CD8-positive, alpha-beta T cell (primary cell): ENCODE measurements at regions of chr19 and their contacts with region 1.

Region 1: DNA sequence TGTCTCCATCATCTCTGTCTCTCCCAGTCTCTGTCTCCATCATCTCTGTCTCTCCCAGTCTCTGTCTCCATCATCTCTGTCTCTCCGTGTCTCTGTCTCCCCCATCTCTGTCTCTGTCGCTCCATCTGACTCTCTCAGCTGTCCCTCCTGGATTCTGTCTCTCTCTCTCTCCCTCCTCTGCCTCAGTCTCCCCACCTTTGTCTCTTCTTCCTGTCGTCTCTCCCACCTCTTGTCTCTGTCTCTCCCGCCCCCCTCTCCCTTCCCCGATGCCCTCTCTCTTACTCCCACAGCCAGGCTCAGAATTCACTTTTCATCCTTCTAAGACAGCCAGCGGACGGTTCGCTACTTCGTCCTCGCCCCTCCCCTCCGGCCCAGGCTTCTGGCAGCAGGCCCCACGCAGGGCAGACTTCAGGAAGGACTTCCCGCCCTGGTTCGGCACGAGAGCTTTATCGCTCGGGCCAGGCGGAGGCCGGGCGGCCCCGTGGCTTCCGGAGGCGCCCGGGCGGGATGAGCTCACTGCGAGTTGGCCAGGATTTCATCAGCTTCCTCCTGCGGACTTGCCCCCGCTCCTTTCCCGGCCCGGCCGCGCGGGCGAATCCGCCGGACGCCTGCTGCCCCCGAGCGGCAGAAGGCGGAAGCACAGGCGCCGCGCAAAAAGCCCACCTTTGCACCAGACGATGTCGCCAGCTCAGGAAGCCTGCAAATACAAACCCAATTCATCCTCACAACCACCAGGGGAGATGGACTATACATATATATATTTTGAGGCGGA is 12.4 kb upstream of the CCDC9 start:
- DNase-seq: peak; percentile 81 to 96 (median 88)
- ATAC-seq: peak; percentile 52
- H3K4me3 ChIP-seq: peak overlapping the region; percentile 27 to 40
- H3K4me3 Mint-ChIP-seq: peak overlapping the region; percentile 65
- H3K27ac ChIP-seq: peak overlapping the region; percentile 18 to 62
- H3K27ac Mint-ChIP-seq: peak overlapping the region; percentile 75
- H3K4me1 ChIP-seq: peaks cover 47% of the 10 kb centered on the region
- H3K4me1 Mint-ChIP-seq: peaks cover 36% of the 10 kb centered on the region
- H3K27me3 ChIP-seq: no peaks in the 10 kb centered on the region
- H3K27me3 Mint-ChIP-seq: no peaks in the 10 kb centered on the region
- CTCF ChIP-seq: peak; percentile 98

Region 2: DNA sequence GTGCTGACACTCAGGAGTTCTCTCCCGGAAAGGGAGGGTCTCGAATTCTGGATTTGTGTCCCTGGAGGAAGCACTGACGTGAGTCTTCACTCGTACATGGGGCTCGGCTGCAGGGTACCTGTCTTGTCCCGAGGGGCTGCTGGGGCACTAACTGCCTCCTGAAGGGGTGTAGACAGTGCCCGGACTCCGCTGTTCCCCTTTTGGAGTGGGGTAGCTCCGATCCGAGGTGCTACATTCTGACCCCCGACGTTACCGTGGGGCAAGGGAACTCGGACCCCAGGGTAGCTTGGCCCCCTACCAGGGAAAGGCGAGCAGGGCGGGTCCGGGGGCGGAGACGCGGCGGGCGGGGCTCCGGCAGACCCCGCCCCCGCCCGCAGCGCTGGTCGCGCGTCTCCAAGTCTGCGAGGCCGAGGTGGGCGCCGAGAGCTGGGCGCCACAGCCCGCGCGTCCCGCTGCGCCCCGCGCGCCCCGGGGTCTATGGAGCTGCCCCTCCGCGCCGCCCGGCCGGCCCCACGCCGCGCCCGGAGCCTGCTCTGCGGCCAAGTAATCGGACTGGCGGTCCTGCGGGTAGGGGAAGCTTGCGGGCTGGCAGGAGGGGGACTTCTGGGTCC is 224.4 kb before region 1 on chr19 and contains the start of gene NPAS1:
- CTCF ChIA-PET with region 1: no interaction called
- POLR2A ChIA-PET with region 1: no interaction called
- intact Hi-C with region 1: no loop called
- DNase-seq: peak in 1 of 9 experiments; percentile 10
- ATAC-seq: no peak
- H3K4me3 ChIP-seq: no peak within 1 kb of the TSS
- H3K4me3 Mint-ChIP-seq: peak within 1 kb of the TSS; percentile 26
- H3K27ac ChIP-seq: no peak within 1 kb of the TSS
- H3K27ac Mint-ChIP-seq: no peak within 1 kb of the TSS
- H3K4me1 ChIP-seq: peaks cover 26% of the 10 kb centered on the region
- H3K4me1 Mint-ChIP-seq: peaks cover 17% of the 10 kb centered on the region
- H3K27me3 ChIP-seq: peaks cover 26 to 32% of the 10 kb centered on the region in 2 experiments
- H3K27me3 Mint-ChIP-seq: peaks cover 33% of the 10 kb centered on the region
- CTCF ChIP-seq: no peak
- total RNA-seq, gene NPAS1: 1.1 to 1.6 TPM

Region 3: GRCh38 chr19:47130591-47131227 is 113.3 kb before region 1 on chr19 and contains the start of gene SAE1:
- CTCF ChIA-PET with region 1: interaction called, 76 read pairs
- POLR2A ChIA-PET with region 1: interaction called, 5 read pairs
- intact Hi-C with region 1: loop called in 1 of 2 experiments (anchors 1 kb)
- DNase-seq: peak; percentile 85 to 95 (median 88)
- ATAC-seq: peak; percentile 88
- H3K4me3 ChIP-seq: peak within 1 kb of the TSS; percentile 91 to 99
- H3K4me3 Mint-ChIP-seq: peak within 1 kb of the TSS; percentile 99
- H3K27ac ChIP-seq: peak within 1 kb of the TSS; percentile 59 to 86
- H3K27ac Mint-ChIP-seq: peak within 1 kb of the TSS; percentile 91
- H3K4me1 ChIP-seq: peaks cover 37% of the 10 kb centered on the region
- H3K4me1 Mint-ChIP-seq: peaks cover 47% of the 10 kb centered on the region
- H3K27me3 ChIP-seq: no peaks in the 10 kb centered on the region
- H3K27me3 Mint-ChIP-seq: no peaks in the 10 kb centered on the region
- CTCF ChIP-seq: peak; percentile 67
- total RNA-seq, gene SAE1: 22.4 TPM

Region 4: DNA sequence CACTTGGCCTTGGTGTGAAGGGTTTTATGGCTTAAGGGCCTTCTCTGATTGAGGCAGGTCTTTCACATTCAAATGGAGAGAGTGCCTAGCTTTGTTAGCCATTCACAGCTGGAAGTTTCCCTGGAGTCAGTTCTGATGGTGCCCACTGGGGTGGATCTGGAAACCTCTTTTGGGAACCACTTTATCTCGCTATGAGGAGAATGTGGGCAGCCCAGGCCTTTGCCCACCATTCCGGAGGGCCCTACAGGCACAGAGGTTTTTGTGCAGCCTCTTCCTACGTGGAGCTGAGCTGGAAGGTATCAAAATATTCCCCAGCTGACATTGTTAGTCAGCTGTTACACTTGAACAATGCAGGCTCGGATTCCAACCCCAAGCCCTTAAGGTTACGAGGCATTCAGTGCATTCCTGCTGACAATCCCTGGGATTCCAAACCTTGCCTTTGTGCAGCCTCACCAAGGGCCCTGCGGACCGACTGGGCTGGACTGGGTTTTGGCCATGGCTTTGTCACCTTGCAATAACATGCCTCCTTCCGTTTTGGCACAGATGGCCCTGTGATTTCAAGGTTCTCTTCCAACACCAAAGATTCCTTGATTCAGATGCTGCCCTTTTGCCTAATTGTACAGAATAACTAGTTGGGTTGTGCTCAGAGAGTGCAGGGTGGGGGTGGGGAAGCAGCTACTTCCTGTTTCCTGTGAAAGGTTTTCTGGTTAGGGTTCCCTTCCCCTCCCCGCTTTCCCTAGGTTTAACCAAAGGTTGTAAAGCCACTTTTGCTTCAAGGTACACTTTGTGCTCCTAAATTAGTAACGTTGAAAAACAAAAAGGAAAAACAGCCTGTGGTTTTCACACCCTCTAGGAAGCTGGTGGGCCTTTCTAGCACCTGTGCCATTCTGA is 86.3 kb before region 1 on chr19:
- CTCF ChIA-PET with region 1: interaction called, 505 read pairs
- POLR2A ChIA-PET with region 1: interaction called, 19 read pairs
- intact Hi-C with region 1: no loop called
- DNase-seq: peak in 6 of 9 experiments; percentile 37 to 80 (median 64)
- ATAC-seq: peak; percentile 22
- H3K4me3 ChIP-seq: peak overlapping the region; percentile 14 to 42
- H3K4me3 Mint-ChIP-seq: peak overlapping the region; percentile 74
- H3K27ac ChIP-seq: peak overlapping the region; percentile 41 to 48
- H3K27ac Mint-ChIP-seq: peak overlapping the region; percentile 95
- H3K4me1 ChIP-seq: peaks cover 61% of the 10 kb centered on the region
- H3K4me1 Mint-ChIP-seq: peaks cover 73% of the 10 kb centered on the region
- H3K27me3 ChIP-seq: no peaks in the 10 kb centered on the region
- H3K27me3 Mint-ChIP-seq: no peaks in the 10 kb centered on the region
- CTCF ChIP-seq: no peak

Region 5: DNA sequence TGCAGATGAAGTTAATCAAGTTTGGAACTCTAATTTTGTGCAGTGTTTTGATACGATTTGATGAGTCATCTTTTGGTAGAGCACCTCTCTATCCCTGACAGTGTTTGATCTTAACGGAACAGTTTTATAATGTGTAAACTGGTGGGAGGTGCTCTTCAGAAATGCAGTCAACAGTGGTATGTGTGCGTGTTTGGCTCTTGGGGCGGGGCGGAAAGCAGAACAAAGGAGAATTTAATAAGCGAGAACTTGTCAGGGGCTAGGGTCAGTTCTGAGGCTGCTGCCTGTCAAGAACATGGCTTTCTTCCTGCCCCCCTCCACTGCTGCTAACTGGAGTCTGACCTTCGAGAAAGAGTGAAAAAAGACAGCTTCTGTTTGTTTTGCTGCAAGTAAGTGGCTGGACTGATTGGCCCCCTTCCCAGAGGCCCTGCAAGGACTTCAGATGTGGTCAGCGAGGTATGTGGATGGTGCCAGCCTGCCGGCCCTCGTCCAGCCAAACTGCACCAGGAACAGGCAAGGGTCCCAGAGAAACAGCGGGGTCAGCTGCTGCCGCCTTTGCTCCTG is 53.7 kb before region 1 on chr19:
- CTCF ChIA-PET with region 1: interaction called, 24 read pairs
- POLR2A ChIA-PET with region 1: interaction called, 6 read pairs
- intact Hi-C with region 1: loop called (anchors 2 kb)
- DNase-seq: peak in 8 of 9 experiments; percentile 18 to 80 (median 59)
- ATAC-seq: peak; percentile 39
- H3K4me3 ChIP-seq: no peak overlapping the region
- H3K4me3 Mint-ChIP-seq: peak overlapping the region; percentile 38
- H3K27ac ChIP-seq: peak overlapping the region in 1 of 2 experiments; percentile 9
- H3K27ac Mint-ChIP-seq: peak overlapping the region; percentile 94
- H3K4me1 ChIP-seq: peaks cover 70% of the 10 kb centered on the region
- H3K4me1 Mint-ChIP-seq: peaks cover 65% of the 10 kb centered on the region
- H3K27me3 ChIP-seq: no peaks in the 10 kb centered on the region
- H3K27me3 Mint-ChIP-seq: no peaks in the 10 kb centered on the region
- CTCF ChIP-seq: no peak

Region 6: GRCh38 chr19:47225746-47226425 is 18.1 kb before region 1 on chr19:
- CTCF ChIA-PET with region 1: interaction called, 116 read pairs
- POLR2A ChIA-PET with region 1: interaction called, 32 read pairs
- intact Hi-C with region 1: loop called (anchors 1 kb)
- DNase-seq: peak; percentile 80 to 95 (median 86)
- ATAC-seq: peak; percentile 47
- H3K4me3 ChIP-seq: peak overlapping the region; percentile 48 to 68
- H3K4me3 Mint-ChIP-seq: peak overlapping the region; percentile 81
- H3K27ac ChIP-seq: peak overlapping the region; percentile 73 to 89
- H3K27ac Mint-ChIP-seq: peak overlapping the region; percentile 92
- H3K4me1 ChIP-seq: peaks cover 40% of the 10 kb centered on the region
- H3K4me1 Mint-ChIP-seq: peaks cover 16% of the 10 kb centered on the region
- H3K27me3 ChIP-seq: no peaks in the 10 kb centered on the region
- H3K27me3 Mint-ChIP-seq: no peaks in the 10 kb centered on the region
- CTCF ChIP-seq: peak; percentile 51

Region 7: GRCh38 chr19:47296036-47296435 is 52.1 kb after region 1 on chr19:
- CTCF ChIA-PET with region 1: no interaction called
- POLR2A ChIA-PET with region 1: no interaction called
- intact Hi-C with region 1: no loop called
- DNase-seq: peak; percentile 41 to 87 (median 76)
- ATAC-seq: peak; percentile 91
- H3K4me3 ChIP-seq: no peak overlapping the region
- H3K4me3 Mint-ChIP-seq: no peak overlapping the region
- H3K27ac ChIP-seq: no peak overlapping the region
- H3K27ac Mint-ChIP-seq: no peak overlapping the region
- H3K4me1 ChIP-seq: no peaks in the 10 kb centered on the region
- H3K4me1 Mint-ChIP-seq: peaks cover 3% of the 10 kb centered on the region
- H3K27me3 ChIP-seq: no peaks in the 10 kb centered on the region
- H3K27me3 Mint-ChIP-seq: no peaks in the 10 kb centered on the region
- CTCF ChIP-seq: peak; percentile 68

Region 8: DNA sequence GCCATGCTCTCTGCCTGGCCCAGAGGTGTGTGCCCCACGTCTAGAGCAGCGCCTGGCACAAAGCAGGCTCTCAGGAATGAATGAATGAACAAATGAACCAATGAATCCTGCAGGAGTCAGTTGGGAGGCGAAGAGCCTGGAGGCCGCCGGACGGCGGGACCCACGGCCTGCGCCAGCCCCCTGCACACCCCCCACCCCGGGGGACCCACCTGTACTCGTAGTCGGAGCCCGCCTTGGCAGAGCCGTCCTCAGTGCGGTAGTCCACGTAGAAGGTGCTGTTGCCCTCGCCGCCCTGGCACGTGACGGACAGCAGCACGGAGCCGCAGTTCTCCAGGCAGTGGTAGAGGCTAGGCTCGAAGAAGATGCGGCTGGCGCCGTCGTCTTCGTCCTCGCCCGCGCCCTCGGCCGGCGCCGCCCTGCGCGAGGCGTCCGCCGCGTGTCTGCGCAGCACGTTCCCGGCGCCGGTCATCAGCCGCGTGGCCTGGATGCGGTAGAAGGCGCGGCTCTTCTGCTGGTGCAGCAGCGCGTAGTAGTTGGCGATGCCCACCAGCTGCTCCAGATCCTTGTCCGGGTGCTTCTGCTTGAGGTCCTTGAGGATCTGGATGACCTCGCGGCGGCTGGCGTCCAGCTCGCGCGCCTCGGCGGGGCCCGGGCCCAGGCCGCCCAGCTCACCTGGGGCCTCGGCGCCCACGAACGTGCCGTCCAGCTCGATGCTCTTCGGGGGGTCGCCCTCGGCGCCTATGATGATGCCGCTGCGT is 212.9 kb after region 1 on chr19:
- CTCF ChIA-PET with region 1: no interaction called
- POLR2A ChIA-PET with region 1: no interaction called
- intact Hi-C with region 1: no loop called
- DNase-seq: no peak
- ATAC-seq: no peak
- H3K4me3 ChIP-seq: no peak overlapping the region
- H3K4me3 Mint-ChIP-seq: no peak overlapping the region
- H3K27ac ChIP-seq: no peak overlapping the region
- H3K27ac Mint-ChIP-seq: no peak overlapping the region
- H3K4me1 ChIP-seq: no peaks in the 10 kb centered on the region
- H3K4me1 Mint-ChIP-seq: no peaks in the 10 kb centered on the region
- H3K27me3 ChIP-seq: peaks cover 20 to 29% of the 10 kb centered on the region in 2 experiments
- H3K27me3 Mint-ChIP-seq: peaks cover 28% of the 10 kb centered on the region
- CTCF ChIP-seq: no peak